Naive thymus-derived CD4-positive, alpha-beta T cell (primary cell): ENCODE measurements at regions of chr1 and their contacts with region 1.

Region 1: DNA sequence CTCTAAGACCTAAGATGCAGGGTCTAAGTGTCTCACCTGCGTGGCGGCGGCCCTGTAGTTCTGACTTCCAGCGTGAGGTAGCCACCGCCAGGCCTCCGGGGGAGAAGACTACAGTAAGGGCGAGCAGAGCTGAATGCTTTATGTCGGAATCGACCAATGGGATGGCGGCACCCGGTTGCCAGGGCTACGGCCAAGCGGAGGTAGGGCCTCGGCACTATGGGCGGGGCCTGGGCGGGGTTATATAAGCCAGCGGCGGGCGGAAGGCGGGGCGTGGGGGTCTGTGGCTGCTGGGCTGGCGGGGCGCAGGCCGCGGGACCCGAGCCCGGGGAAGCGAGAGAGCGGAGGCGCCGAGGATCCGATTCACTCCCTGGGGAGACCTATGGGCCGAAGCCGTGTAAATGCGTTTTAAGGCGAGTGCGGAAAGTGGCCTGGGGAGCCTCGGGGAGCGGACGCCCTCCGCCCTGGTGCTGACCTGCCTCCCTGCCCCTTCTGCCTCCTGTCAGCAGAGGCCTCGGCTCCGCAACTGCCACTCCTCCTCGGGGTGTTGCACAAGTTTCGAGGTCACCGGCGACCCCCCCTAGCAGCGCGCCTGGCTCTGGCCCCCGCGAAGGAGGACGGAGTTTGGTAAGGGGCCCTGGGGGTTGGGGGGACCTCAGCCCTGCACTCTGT is at the start of gene AZIN2:
- DNase-seq: peak; percentile 94 to 99 (median 95)
- ATAC-seq: peak; percentile 99
- H3K4me3 ChIP-seq: peak within 1 kb of the TSS; percentile 68
- H3K4me3 Mint-ChIP-seq: peak within 1 kb of the TSS; percentile 81 to 88 (median 86)
- H3K27ac ChIP-seq: peak within 1 kb of the TSS; percentile 66
- H3K27ac Mint-ChIP-seq: peak within 1 kb of the TSS; percentile 6 to 91 (median 72)
- H3K4me1 ChIP-seq: peaks cover 14 to 15% of the 10 kb centered on the region in 2 donors
- H3K4me1 Mint-ChIP-seq: peaks cover 20 to 40% (median 35%) of the 10 kb centered on the region in 7 donors
- H3K27me3 ChIP-seq: no peaks in the 10 kb centered on the region
- H3K27me3 Mint-ChIP-seq: peaks cover 0 to 30% (median 0%) of the 10 kb centered on the region in 5 donors
- total RNA-seq, gene AZIN2: 5.3 to 9.6 (median 9.0) TPM

Region 2: DNA sequence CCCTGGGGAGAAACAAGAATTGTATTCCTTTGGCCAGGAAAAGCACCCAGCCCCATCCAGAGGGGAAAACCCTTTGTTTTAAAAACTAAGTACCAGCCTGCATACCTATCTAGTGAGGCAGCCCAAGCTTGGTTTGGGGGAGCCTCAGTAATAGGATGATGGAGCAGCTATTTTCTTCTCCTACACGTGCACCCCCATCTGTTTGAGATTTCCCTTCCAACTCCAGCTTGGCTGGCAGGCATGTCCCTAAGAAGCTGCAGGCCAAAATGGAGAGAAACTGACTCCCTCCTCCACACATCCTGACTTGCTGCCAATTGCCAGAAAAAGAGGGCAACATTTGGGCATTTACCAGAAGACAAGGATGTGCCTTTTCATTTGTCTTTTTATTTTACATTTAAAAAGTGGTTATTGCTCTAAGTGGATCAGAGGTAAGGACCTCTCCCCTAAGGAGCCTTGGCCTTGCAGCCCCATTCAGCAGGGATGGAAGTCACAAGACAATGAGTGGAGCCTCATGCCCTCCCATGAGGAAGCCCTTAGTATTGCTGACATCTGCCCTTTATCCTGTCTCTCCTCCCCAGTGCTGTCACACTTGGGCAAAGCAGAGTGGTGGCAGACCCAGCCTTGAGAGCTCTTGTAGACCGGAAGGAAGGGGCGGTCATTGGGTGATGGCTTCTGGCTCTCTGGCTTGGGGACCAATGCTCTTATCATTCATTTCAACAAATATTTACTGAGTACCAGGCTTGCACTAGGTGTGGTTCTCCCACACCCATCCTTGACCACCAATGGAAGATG is 218.9 kb before region 1 on chr1:
- CTCF ChIA-PET with region 1: no interaction called
- POLR2A ChIA-PET with region 1: no interaction called
- intact Hi-C with region 1: no loop called
- DNase-seq: no peak
- ATAC-seq: no peak
- H3K4me3 ChIP-seq: no peak overlapping the region
- H3K4me3 Mint-ChIP-seq: no peak overlapping the region
- H3K27ac ChIP-seq: no peak overlapping the region
- H3K27ac Mint-ChIP-seq: no peak overlapping the region
- H3K4me1 ChIP-seq: no peaks in the 10 kb centered on the region
- H3K4me1 Mint-ChIP-seq: peaks cover 0 to 5% (median 0%) of the 10 kb centered on the region in 7 donors
- H3K27me3 ChIP-seq: no peaks in the 10 kb centered on the region
- H3K27me3 Mint-ChIP-seq: no peaks in the 10 kb centered on the region

Region 3: GRCh38 chr1:32939655-32940371 is 141.2 kb before region 1 on chr1:
- CTCF ChIA-PET with region 1: no interaction called
- POLR2A ChIA-PET with region 1: no interaction called
- intact Hi-C with region 1: loop called in 1 of 2 experiments (anchors 10 kb)
- DNase-seq: no peak
- ATAC-seq: peak; percentile 52
- H3K4me3 ChIP-seq: no peak overlapping the region
- H3K4me3 Mint-ChIP-seq: peak overlapping the region in 1 of 10 donors; percentile 52
- H3K27ac ChIP-seq: no peak overlapping the region
- H3K27ac Mint-ChIP-seq: peak overlapping the region in 1 of 9 donors; percentile 34
- H3K4me1 ChIP-seq: peaks cover 0 to 7% of the 10 kb centered on the region in 2 donors
- H3K4me1 Mint-ChIP-seq: peaks cover 0 to 62% (median 12%) of the 10 kb centered on the region in 7 donors
- H3K27me3 ChIP-seq: no peaks in the 10 kb centered on the region
- H3K27me3 Mint-ChIP-seq: no peaks in the 10 kb centered on the region

Region 4: GRCh38 chr1:33094971-33095604 is 14.1 kb after region 1 on chr1:
- CTCF ChIA-PET with region 1: interaction called, 15 read pairs
- POLR2A ChIA-PET with region 1: interaction called, 6 read pairs
- intact Hi-C with region 1: loop called (anchors 1 kb)
- DNase-seq: no peak
- ATAC-seq: no peak
- H3K4me3 ChIP-seq: no peak overlapping the region
- H3K4me3 Mint-ChIP-seq: no peak overlapping the region
- H3K27ac ChIP-seq: no peak overlapping the region
- H3K27ac Mint-ChIP-seq: peak overlapping the region in 1 of 9 donors; percentile 24
- H3K4me1 ChIP-seq: peaks cover 28 to 29% of the 10 kb centered on the region in 2 donors
- H3K4me1 Mint-ChIP-seq: peaks cover 27 to 70% (median 46%) of the 10 kb centered on the region in 7 donors
- H3K27me3 ChIP-seq: no peaks in the 10 kb centered on the region
- H3K27me3 Mint-ChIP-seq: no peaks in the 10 kb centered on the region

Region 5: GRCh38 chr1:33256701-33257399 is 175.8 kb after region 1 on chr1:
- CTCF ChIA-PET with region 1: no interaction called
- POLR2A ChIA-PET with region 1: no interaction called
- intact Hi-C with region 1: loop called in 1 of 2 experiments (anchors 5 kb)
- DNase-seq: peak in 8 of 9 donors; percentile 41 to 68 (median 62)
- ATAC-seq: peak; percentile 80
- H3K4me3 ChIP-seq: peak overlapping the region; percentile 84
- H3K4me3 Mint-ChIP-seq: peak overlapping the region; percentile 97 to 100 (median 99)
- H3K27ac ChIP-seq: peak overlapping the region; percentile 74
- H3K27ac Mint-ChIP-seq: peak overlapping the region; percentile 97 to 99 (median 98)
- H3K4me1 ChIP-seq: peaks cover 16 to 31% of the 10 kb centered on the region in 2 donors
- H3K4me1 Mint-ChIP-seq: peaks cover 29 to 47% (median 42%) of the 10 kb centered on the region in 7 donors
- H3K27me3 ChIP-seq: no peaks in the 10 kb centered on the region
- H3K27me3 Mint-ChIP-seq: peaks cover 0 to under 1% (median 0%) of the 10 kb centered on the region in 5 donors